AG04450 (cell line): ENCODE measurements at regions of chr3 and their contacts with region 1.

Region 1: DNA sequence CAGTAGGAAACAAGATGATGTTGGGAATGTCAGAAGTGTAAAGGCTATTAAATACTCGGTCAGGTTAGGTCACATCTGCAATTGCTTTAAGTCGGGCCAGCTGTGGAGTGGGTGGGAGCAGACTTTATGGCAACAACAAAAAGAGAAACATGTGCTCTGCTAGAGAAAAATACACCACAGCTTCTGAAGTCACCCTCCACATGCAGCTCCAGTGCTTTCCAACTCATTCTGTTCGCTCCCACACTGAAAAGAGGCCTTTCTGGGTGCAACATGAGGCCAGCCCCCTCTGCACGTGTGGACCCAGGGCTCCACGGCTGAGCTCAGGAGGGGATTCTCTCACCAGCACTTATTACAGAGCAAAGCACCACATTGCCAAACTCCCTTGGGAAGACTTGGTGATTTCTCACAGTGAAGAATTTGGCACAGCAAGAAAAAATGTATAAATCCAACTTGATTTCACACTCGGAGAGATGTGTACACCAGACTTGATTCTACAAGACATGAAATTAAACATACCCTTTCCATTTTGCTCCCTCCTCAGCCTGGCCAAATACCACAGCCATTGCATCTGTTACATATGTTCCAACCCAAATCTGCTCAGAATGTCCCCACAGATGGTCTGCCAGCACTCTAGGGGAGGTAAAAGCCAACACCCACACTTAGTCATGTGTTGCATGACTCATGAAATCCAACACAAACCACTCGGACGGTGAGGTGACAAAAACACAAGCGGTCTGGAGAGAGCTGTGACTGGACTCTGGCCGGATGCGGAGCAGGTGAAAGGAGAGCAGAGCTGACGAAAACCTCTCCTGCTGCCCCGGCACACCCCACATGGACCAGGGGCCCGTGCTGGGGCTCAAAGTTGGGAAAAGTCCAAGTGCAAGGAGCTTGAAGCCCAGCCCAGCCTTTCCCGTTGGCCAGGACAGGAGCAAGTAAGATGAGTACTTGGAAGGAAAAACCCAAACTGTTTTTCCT is 74.6 kb downstream of the ITGB5 start:
- DNase-seq: peak; percentile 95
- H3K4me3 ChIP-seq: peak overlapping the region; percentile 36; the same call in 1 of the 2 replicates
- H3K27ac ChIP-seq: peak overlapping the region; percentile 96
- H3K27me3 ChIP-seq: no peaks in the 10 kb centered on the region
- CTCF ChIP-seq: no peak

Region 2: GRCh38 chr3:124420392-124420791 is 392.2 kb before region 1 on chr3:
- CTCF ChIA-PET with region 1: no interaction called
- POLR2A ChIA-PET with region 1: no interaction called
- DNase-seq: no peak
- H3K4me3 ChIP-seq: no peak overlapping the region
- H3K27ac ChIP-seq: no peak overlapping the region
- H3K27me3 ChIP-seq: no peaks in the 10 kb centered on the region
- CTCF ChIP-seq: no peak

Region 3: DNA sequence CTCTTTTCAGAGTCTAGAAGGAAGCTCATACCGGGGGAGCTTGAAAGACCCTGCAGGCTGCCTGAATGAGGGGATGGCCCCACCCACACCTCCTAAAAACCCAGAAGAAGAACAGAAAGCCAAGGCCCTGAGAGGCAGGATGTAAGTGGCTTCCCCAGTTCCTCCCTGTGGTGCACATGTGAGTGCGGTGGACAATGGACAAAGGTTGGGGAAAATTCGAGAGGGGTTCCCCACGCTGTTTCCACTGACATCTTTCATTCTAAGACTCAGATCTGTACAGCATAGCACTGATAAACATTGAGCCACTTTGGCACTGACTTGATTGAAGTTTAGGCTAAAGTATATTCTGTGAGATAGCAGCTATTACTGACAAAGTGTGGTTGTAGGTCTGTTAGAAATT is 161.8 kb before region 1 on chr3:
- CTCF ChIA-PET with region 1: no interaction called
- POLR2A ChIA-PET with region 1: no interaction called
- DNase-seq: no peak
- H3K4me3 ChIP-seq: no peak overlapping the region
- H3K27ac ChIP-seq: no peak overlapping the region
- H3K27me3 ChIP-seq: peaks cover 11% of the 10 kb centered on the region
- CTCF ChIP-seq: no peak

Region 4: DNA sequence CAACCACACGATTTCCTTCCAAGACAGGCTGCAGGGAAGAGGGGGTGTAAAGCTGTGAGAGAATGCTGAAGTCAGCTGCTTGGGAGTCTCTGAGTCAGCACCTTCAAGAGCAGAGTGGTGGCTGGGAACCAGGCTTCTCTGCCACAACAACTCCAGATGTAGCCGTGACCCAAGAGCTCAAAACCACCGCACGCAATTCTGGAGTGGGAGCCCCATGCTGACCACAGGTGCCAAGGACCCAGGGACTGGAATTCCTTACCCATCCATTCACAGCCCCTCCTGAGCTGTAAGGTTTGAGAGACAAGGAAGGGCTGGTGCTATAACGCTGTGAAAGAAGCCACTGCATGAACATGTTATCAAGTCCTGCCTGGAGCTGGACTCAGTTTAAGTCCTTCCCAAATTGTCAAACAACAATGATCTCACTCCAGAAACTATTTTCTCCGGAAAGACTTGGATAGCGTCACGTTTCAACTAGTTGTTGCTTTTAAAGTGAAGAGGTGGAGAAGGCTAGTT is 20.9 kb before region 1 on chr3:
- CTCF ChIA-PET with region 1: interaction called, 6 read pairs
- POLR2A ChIA-PET with region 1: interaction called, 11 read pairs
- DNase-seq: peak; percentile 91
- H3K4me3 ChIP-seq: no peak overlapping the region
- H3K27ac ChIP-seq: peak overlapping the region; percentile 87
- H3K27me3 ChIP-seq: no peaks in the 10 kb centered on the region
- CTCF ChIP-seq: no peak

Region 5: DNA sequence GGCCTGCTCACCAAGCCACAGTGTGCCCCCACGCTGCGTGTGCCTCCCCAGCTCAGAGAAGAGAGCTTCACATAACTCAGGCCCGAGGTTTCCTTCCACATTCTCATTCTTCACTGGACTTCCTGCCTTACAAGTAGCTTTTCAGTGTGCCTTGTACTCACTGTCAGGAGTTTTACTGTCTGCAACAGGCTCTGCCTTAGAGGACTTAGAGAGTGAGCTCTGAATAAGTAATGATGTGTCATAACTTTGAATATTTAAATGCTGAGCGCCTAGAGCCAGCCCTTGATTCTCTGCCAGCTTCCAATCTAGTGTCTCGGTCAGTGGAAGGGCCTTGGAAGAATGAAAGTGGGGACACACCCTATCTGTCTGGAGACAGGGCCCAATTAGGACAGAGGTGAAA is 32.8 kb after region 1 on chr3:
- CTCF ChIA-PET with region 1: no interaction called
- POLR2A ChIA-PET with region 1: interaction called, 10 read pairs
- DNase-seq: no peak
- H3K4me3 ChIP-seq: no peak overlapping the region
- H3K27ac ChIP-seq: peak overlapping the region; percentile 89
- H3K27me3 ChIP-seq: no peaks in the 10 kb centered on the region
- CTCF ChIP-seq: no peak